CD14-positive monocyte (primary cell): ENCODE measurements at regions of chr12 and their contacts with region 1.

Region 1: GRCh38 chr12:1795785-1796514 is 24.4 kb upstream of the LRTM2 start:
- DNase-seq: peak; percentile 88 to 90 (median 89)
- H3K4me3 ChIP-seq: peak overlapping the region; percentile 77 to 84 (median 79)
- H3K4me3 Mint-ChIP-seq: peak overlapping the region; percentile 81 to 90
- H3K27ac ChIP-seq: peak overlapping the region; percentile 79 to 95
- H3K27ac Mint-ChIP-seq: peak overlapping the region; percentile 81 to 94 (median 90)
- H3K4me1 ChIP-seq: peaks cover 20 to 33% of the 10 kb centered on the region in 2 donors
- H3K4me1 Mint-ChIP-seq: peaks cover 22% of the 10 kb centered on the region
- H3K27me3 ChIP-seq: no peaks in the 10 kb centered on the region
- H3K27me3 Mint-ChIP-seq: no peaks in the 10 kb centered on the region
- CTCF ChIP-seq: peak; percentile 93

Region 2: DNA sequence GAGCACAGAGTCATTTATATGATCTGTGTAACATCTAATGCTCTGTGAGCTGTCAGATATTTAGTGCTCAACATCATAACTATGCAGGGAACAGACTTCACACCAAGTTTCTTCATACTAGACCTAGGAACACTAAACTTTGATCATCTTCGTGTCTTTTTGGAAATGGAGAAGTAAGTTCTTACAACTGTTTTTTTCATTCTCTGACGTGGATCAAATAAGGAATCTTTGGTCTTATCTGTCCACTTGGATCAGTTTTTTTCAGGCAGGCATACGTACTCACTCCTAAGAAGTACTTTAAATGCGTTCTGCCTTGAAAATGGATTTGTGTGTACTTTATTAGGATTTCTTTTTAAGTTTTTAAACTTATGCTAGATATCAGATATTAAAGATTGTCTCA is 392.5 kb before region 1 on chr12:
- intact Hi-C with region 1: no loop called
- DNase-seq: peak in 1 of 3 donors; percentile 10
- H3K4me3 ChIP-seq: no peak overlapping the region
- H3K4me3 Mint-ChIP-seq: no peak overlapping the region
- H3K27ac ChIP-seq: no peak overlapping the region
- H3K27ac Mint-ChIP-seq: peak overlapping the region in 2 of 7 donors; percentile 11 to 61
- H3K4me1 ChIP-seq: peaks cover 12 to 24% of the 10 kb centered on the region in 2 donors
- H3K4me1 Mint-ChIP-seq: peaks cover 26% of the 10 kb centered on the region
- H3K27me3 ChIP-seq: no peaks in the 10 kb centered on the region
- H3K27me3 Mint-ChIP-seq: peaks cover 0 to 1% (median 0%) of the 10 kb centered on the region in 3 donors
- CTCF ChIP-seq: no peak

Region 3: DNA sequence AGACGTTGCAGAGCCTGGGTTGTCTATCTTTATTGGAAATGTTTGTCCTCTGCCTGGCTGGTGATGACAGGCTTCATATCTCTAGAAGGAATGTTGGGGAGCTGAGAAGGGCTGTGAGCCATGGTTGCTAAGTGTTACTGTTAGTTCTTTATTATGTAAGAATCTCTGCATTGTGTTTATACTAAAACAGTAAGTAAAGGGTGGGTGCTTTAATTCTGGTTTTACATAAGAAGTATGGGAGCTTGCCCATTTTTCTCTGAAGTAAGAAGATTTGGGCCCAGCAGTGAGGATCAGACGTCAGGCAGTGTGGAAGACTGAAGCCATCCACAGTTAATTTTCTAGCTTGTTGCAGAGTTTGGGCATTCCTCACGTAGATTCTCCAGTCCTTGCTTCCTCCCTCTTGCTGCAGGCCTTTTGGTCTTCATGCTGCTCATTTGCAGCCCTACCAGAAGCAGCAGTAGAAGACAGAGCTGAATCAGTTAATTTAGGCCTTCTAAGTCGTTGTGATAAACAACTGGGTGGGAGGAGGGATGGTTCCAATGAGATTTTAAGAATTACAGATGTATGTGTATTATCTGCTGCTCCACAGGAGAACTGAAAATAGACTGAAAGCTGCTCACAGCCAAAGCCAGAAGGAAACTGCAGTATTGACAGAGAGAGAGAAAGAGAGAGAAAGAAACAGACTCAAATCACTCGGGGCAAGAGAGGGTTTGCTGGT is 145.5 kb before region 1 on chr12:
- intact Hi-C with region 1: loop called (anchors 1 kb)
- DNase-seq: no peak
- H3K4me3 ChIP-seq: no peak overlapping the region
- H3K4me3 Mint-ChIP-seq: no peak overlapping the region
- H3K27ac ChIP-seq: no peak overlapping the region
- H3K27ac Mint-ChIP-seq: no peak overlapping the region
- H3K4me1 ChIP-seq: peaks cover 13 to 15% of the 10 kb centered on the region in 2 donors
- H3K4me1 Mint-ChIP-seq: peaks cover 28% of the 10 kb centered on the region
- H3K27me3 ChIP-seq: no peaks in the 10 kb centered on the region
- H3K27me3 Mint-ChIP-seq: peaks cover 0 to 3% (median under 1%) of the 10 kb centered on the region in 3 donors
- CTCF ChIP-seq: no peak

Region 4: GRCh38 chr12:1812650-1813302 is 16.8 kb after region 1 on chr12:
- intact Hi-C with region 1: loop called in 1 of 2 experiments (anchors 2 kb)
- DNase-seq: peak; percentile 87 to 94 (median 91)
- H3K4me3 ChIP-seq: peak overlapping the region in 1 of 3 experiments; percentile 69
- H3K4me3 Mint-ChIP-seq: peak overlapping the region; percentile 47 to 84
- H3K27ac ChIP-seq: peak overlapping the region; percentile 94 to 98
- H3K27ac Mint-ChIP-seq: peak overlapping the region; percentile 98 to 100 (median 100)
- H3K4me1 ChIP-seq: peaks cover 76 to 86% of the 10 kb centered on the region in 2 donors
- H3K4me1 Mint-ChIP-seq: peaks cover 81% of the 10 kb centered on the region
- H3K27me3 ChIP-seq: no peaks in the 10 kb centered on the region
- H3K27me3 Mint-ChIP-seq: peaks cover 2 to 3% (median 3%) of the 10 kb centered on the region in 3 donors
- CTCF ChIP-seq: no peak

Region 5: DNA sequence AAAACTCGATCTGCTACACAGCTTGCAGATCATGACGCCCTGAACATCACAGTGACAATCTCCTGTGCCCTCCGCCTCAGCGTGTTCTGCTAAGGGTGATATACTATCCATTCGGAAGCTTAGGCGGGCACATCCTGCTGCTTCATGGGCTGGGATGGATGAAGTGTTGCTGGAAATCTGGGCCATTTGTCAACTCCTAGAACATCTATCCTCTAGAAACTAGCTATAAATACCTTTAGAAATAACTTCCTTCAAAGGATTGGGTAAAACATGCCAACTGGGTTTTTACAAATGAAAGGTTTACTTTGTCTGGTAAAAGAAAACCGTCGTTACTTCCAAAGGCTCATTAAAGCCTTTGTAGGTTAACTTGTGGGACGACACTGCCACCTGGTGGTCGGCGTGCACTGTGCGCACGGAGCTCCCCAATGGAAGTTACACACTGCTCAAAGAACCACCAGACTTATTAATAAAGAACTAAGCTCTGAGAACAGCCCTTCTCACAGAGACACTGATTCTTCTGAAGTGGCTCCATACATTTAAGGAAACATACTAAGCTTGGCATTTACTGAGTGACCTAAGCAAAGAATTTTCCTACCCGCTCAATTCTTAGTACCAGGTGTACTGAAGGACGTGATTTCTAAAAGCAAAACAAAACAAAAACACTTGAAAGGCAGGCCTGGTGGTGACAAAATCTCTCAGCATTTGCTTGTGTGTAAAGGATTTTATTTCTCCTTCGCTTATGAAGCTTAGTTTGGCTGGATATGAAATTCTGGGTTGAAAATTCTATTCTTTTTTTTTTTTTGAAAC is 144.1 kb after region 1 on chr12:
- intact Hi-C with region 1: loop called (anchors 1 to 2 kb)
- DNase-seq: peak; percentile 78 to 81 (median 78)
- H3K4me3 ChIP-seq: no peak overlapping the region
- H3K4me3 Mint-ChIP-seq: no peak overlapping the region
- H3K27ac ChIP-seq: no peak overlapping the region
- H3K27ac Mint-ChIP-seq: peak overlapping the region in 1 of 7 donors; percentile 46
- H3K4me1 ChIP-seq: peaks cover 3 to 4% of the 10 kb centered on the region in 2 donors
- H3K4me1 Mint-ChIP-seq: peaks cover 4% of the 10 kb centered on the region
- H3K27me3 ChIP-seq: no peaks in the 10 kb centered on the region
- H3K27me3 Mint-ChIP-seq: peaks cover 0 to 1% (median 0%) of the 10 kb centered on the region in 3 donors
- CTCF ChIP-seq: peak; percentile 89